ENCODE measurements at regions of chr3 and their contacts with region 1.

Region 1: GRCh38 chr3:159260049-159260662 is 458.3 kb downstream of the MFSD1 start:
- DNase-seq: peak; percentile 69
- H3K4me3 ChIP-seq: no peak overlapping the region
- CTCF ChIP-seq: peak; percentile 54

Region 2: GRCh38 chr3:158801696-158802408 is 458.3 kb before region 1 on chr3 and contains the start of gene MFSD1:
- CTCF ChIA-PET with region 1: interaction called, 35 read pairs
- POLR2A ChIA-PET with region 1: no interaction called
- DNase-seq: peak; percentile 44
- H3K4me3 ChIP-seq: peak within 1 kb of the TSS; percentile 83
- CTCF ChIP-seq: no peak

Region 3: DNA sequence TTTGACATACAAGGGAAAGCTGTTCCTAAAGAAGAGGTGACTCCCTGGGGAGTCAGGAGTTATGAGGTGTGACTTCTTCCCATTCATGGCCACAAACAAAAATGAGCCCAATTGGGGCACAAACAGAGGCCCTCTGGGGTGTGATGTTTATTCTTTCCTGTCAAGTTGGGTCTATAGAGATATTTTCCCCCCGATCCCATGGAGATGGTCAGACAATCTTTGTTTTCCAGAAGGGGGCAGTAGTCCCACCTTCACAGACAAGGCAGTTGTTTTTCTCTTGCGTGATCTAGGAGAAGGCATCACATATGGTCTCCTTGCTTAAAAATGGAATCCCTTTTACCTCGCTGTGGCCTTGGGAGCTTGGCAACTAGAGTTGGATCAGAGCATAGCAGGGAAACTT is 348.0 kb before region 1 on chr3:
- CTCF ChIA-PET with region 1: interaction called, 67 read pairs
- POLR2A ChIA-PET with region 1: no interaction called
- DNase-seq: no peak
- H3K4me3 ChIP-seq: no peak overlapping the region
- CTCF ChIP-seq: no peak

Region 4: DNA sequence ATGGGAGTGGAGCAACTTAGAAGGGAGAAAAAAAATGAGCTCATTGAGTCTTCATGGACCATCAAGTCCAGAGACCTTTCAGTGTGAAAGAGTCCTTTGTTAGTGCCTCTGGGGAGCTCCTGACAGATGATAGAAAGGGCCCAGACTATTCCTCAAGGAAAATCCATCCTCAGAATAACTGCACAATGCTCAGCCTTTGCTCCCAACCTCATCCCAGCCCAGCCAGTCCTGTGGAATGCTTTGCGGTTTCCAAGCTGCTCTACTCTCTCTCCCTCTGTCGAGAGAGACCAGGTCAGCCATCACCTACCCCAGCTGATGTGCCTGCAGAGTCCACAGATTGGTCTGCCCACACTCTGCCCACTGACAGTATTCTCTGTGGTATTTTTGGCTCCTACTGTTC is 52.1 kb before region 1 on chr3:
- CTCF ChIA-PET with region 1: no interaction called
- POLR2A ChIA-PET with region 1: no interaction called
- DNase-seq: no peak
- H3K4me3 ChIP-seq: no peak overlapping the region
- CTCF ChIP-seq: no peak

Region 5: GRCh38 chr3:159245871-159246270 is 14.3 kb before region 1 on chr3:
- CTCF ChIA-PET with region 1: interaction called, 32 read pairs
- POLR2A ChIA-PET with region 1: no interaction called
- DNase-seq: no peak
- H3K4me3 ChIP-seq: no peak overlapping the region
- CTCF ChIP-seq: no peak

Region 6: DNA sequence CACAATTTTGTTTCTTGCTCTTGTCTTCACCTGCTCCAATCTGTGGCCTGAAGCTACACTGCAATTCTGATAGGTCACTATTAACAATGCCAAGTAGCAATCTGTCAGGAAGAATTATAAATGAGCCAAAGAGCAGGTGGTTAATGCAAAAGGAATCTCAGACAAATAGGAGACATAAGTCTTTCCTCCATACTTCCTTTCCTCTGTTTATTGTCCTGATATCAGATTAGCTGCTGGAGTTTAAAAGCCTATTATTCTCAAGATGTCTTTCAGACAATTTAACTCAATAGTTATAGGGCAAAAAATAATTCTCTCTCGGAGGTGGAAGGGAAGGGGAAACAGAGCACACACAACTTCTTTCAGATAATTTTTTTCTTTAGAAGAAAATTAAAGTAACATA is 33.3 kb after region 1 on chr3:
- CTCF ChIA-PET with region 1: no interaction called
- POLR2A ChIA-PET with region 1: no interaction called
- DNase-seq: no peak
- H3K4me3 ChIP-seq: no peak overlapping the region
- CTCF ChIP-seq: no peak

Measured in AG04449 (cell line).